Activated CD4-positive, alpha-beta memory T cell treated with anti-CD3 and anti-CD28 coated beads for 36 hours (primary cell): ENCODE measurements at regions of chr3 and their contacts with region 1.

Region 1: DNA sequence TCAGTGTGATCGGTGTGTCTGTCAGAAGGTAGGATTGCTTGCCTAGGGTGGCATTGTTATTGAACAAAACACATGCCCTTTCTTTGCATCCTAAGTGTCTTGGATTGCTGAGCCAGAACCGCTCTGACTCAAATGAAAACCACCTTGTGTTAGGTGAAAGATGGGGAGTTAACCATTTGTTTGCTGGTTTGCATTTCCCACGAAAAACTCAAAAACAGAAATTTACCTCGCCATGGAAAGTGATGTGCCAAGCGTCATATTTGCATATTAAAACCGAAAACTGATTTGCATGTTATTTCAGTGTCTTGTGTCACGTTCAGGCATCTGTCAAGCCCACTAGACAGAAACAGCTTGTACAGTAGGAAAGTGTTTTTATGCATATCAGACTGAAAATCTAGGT is 474.6 kb upstream of the TPRG1 start:
- DNase-seq: peak; percentile 55
- H3K4me3 Mint-ChIP-seq: no peak overlapping the region
- H3K27ac Mint-ChIP-seq: peak overlapping the region; percentile 7
- H3K4me1 Mint-ChIP-seq: peaks cover 50% of the 10 kb centered on the region
- H3K27me3 Mint-ChIP-seq: peaks cover 7% of the 10 kb centered on the region

Region 2: GRCh38 chr3:188584162-188584529 is 113.0 kb before region 1 on chr3:
- CTCF ChIA-PET with region 1: no interaction called
- POLR2A ChIA-PET with region 1: no interaction called
- intact Hi-C with region 1: loop called (anchors 2 kb)
- DNase-seq: peak; percentile 31
- H3K4me3 Mint-ChIP-seq: no peak overlapping the region
- H3K27ac Mint-ChIP-seq: no peak overlapping the region
- H3K4me1 Mint-ChIP-seq: peaks cover 13% of the 10 kb centered on the region
- H3K27me3 Mint-ChIP-seq: no peaks in the 10 kb centered on the region